WTC11 (cell line): ENCODE measurements at regions of chr1 and their contacts with region 1.

Region 1: DNA sequence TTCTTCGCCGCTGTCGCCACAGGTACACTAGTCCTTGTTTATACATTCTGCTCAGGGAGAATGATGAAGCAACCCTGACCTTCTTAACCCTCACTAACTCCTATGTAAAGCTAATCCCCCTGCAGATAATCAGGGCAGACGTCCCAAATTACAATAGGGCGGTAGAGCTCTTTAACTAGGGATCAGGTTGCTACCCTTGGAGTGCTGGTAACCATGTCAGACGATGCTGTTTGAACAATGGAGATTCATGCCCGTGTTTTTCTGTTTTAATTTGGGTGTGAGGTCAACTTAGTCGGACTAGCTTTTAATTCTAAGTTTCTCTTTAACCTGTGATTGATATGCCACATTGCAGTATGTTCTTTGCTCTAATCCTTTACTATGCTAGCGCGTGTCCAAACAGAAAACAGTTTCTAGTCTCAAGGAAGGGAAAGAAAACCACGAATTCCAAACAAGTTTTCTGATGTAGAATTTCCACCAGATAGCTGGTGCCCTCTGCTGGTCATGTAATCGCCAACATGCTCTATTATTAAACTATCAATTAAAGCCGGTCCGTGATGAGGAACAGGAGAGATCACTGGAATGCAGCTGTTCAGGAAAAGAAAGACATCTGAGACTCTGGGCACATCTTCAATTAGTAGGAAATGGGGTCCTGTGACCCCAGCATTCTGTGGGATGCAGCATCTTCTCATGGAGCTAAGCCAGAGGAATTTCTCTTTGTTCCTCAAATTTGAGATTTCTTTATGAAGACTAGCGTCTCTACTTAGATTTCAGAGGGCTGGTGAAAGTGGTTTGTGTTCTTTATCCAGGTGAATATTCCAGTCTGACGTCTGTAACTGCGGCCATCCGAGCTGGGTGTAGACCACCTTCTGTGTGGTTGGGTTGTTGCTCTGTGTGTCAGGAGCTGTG is 18.3 kb upstream of the VAMP3 start:
- DNase-seq: peak; percentile 51
- ATAC-seq: peak; percentile 88
- H3K4me3 Mint-ChIP-seq: peak overlapping the region; percentile 60
- H3K27ac Mint-ChIP-seq: peak overlapping the region; percentile 86
- H3K4me1 Mint-ChIP-seq: peaks cover 27% of the 10 kb centered on the region
- H3K27me3 Mint-ChIP-seq: no peaks in the 10 kb centered on the region
- CTCF ChIP-seq: peak; percentile 37

Region 2: DNA sequence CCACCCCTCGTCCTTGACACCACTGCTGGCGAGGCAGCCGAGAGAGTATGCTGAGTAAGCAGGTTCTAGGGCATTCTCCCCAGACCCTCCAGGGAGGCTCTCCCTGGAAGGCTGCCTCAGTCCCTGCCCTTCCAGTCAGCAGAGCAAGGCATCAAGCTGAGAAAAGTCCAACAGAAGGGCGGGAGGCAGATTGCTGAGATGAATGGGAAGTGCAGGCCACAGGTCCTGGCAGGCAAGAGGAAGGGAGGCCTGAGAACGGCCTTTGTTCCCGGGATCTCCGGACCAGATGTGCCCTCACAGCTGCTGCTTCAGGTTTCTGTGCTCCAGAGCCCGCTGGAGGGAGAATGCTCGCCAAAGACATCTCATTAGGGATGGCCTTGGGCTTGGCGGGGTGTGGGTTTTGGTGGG is 251.7 kb before region 1 on chr1:
- CTCF ChIA-PET with region 1: no interaction called
- POLR2A ChIA-PET with region 1: no interaction called
- DNase-seq: no peak
- ATAC-seq: no peak; the same call in 1 of the 2 replicates
- H3K4me3 Mint-ChIP-seq: no peak overlapping the region
- H3K27ac Mint-ChIP-seq: no peak overlapping the region
- H3K4me1 Mint-ChIP-seq: peaks cover 2% of the 10 kb centered on the region; the same call in 1 of the 2 replicates
- H3K27me3 Mint-ChIP-seq: no peaks in the 10 kb centered on the region
- CTCF ChIP-seq: no peak

Region 3: DNA sequence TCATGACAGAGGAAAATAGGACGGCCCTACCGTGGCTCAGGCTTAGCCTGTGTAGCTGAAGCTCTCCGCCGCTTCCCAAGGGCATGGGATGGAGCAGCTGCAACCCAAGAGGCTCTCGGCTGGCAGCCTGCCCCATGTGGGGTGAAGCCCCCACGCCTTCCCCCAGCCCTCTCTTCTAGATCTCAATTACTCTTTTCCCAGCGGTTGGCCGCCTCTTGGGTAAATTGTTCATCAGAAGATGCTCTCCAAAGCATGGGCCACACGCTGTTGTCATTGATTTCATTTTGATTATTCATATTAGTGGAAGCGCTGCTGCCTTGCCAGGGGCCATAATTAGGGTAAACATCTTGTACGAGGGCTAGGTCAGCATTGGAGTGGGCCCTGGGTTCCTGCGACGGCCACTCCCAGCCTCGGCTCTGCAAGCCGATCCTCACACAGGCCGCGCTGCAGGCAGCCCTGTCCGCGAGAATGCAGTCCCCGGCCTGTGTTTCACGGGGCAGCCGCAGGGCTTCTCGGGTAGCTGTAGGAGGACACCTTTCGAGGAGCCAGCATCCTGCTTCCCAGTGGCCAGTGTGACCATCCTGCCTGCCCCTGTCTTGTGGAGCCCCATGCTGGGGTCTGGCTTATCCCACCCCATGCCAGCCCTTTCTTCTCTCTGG is 96.1 kb before region 1 on chr1:
- CTCF ChIA-PET with region 1: interaction called, 10 read pairs
- POLR2A ChIA-PET with region 1: no interaction called
- DNase-seq: no peak
- ATAC-seq: no peak
- H3K4me3 Mint-ChIP-seq: no peak overlapping the region
- H3K27ac Mint-ChIP-seq: no peak overlapping the region
- H3K4me1 Mint-ChIP-seq: no peaks in the 10 kb centered on the region
- H3K27me3 Mint-ChIP-seq: no peaks in the 10 kb centered on the region; the same call in 1 of the 2 replicates
- CTCF ChIP-seq: no peak

Region 4: GRCh38 chr1:7680207-7680954 is 72.4 kb before region 1 on chr1:
- CTCF ChIA-PET with region 1: interaction called, 48 read pairs
- POLR2A ChIA-PET with region 1: no interaction called
- DNase-seq: peak; percentile 50
- ATAC-seq: peak; percentile 62
- H3K4me3 Mint-ChIP-seq: peak overlapping the region; percentile 63
- H3K27ac Mint-ChIP-seq: no peak overlapping the region
- H3K4me1 Mint-ChIP-seq: no peaks in the 10 kb centered on the region
- H3K27me3 Mint-ChIP-seq: peaks cover 22% of the 10 kb centered on the region
- CTCF ChIP-seq: no peak

Region 5: GRCh38 chr1:7704214-7705047 is 48.3 kb before region 1 on chr1:
- CTCF ChIA-PET with region 1: interaction called, 39 read pairs
- POLR2A ChIA-PET with region 1: interaction called, 3 read pairs
- DNase-seq: peak; percentile 95
- ATAC-seq: peak; percentile 88
- H3K4me3 Mint-ChIP-seq: peak overlapping the region; percentile 70; the same call in 1 of the 2 replicates
- H3K27ac Mint-ChIP-seq: no peak overlapping the region
- H3K4me1 Mint-ChIP-seq: peaks cover 16% of the 10 kb centered on the region
- H3K27me3 Mint-ChIP-seq: peaks cover 54% of the 10 kb centered on the region
- CTCF ChIP-seq: no peak

Region 6: DNA sequence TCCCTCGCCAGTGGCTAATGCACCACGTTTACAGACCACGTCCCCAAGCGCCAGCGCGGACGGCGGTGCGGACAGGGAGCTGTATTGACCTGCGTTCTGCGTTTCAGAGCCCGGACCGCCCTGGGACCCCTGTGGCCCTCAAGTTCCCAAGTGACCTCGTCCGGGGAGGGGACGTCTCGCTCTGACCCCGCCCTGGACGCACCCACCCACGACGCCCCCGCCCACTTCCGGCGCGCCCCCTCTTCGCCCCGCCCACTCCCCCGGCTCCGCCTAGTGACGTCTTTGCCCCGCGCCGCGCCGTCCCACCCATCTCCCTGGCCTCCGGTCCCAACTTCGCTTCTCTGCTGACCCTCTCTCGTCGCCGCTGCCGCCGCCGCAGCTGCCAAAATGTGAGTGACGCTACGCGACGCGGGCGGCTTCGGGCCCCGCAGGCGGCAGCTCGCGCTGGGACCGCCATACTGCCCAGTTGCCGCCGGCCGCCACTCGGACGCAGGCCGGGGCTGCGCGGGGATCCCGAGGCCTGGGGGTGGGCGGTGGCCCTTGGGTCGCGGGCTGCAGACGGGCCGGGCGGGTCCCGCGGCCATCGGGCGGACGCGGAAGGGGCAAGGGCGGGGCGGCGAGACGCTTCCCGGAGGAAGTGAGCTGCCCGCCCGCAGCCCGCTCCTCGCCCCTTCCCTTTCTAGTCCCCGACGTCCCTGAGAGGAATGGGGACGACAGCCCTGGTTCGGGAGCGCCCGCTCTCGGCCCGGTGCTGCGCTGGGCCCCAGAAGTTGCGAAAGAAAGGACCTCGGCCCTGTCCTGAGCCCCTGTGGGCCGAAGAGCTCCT is 18.4 kb after region 1 on chr1 and contains the start of gene VAMP3:
- CTCF ChIA-PET with region 1: interaction called, 13 read pairs
- POLR2A ChIA-PET with region 1: no interaction called
- DNase-seq: peak; percentile 88
- ATAC-seq: peak; percentile 95
- H3K4me3 Mint-ChIP-seq: peak within 1 kb of the TSS; percentile 86
- H3K27ac Mint-ChIP-seq: peak within 1 kb of the TSS; percentile 79
- H3K4me1 Mint-ChIP-seq: peaks cover 15% of the 10 kb centered on the region
- H3K27me3 Mint-ChIP-seq: no peaks in the 10 kb centered on the region
- CTCF ChIP-seq: no peak
- total RNA-seq, gene VAMP3: 34.7 to 50.2 TPM (median 40.2 TPM) in 3 replicates

Region 7: DNA sequence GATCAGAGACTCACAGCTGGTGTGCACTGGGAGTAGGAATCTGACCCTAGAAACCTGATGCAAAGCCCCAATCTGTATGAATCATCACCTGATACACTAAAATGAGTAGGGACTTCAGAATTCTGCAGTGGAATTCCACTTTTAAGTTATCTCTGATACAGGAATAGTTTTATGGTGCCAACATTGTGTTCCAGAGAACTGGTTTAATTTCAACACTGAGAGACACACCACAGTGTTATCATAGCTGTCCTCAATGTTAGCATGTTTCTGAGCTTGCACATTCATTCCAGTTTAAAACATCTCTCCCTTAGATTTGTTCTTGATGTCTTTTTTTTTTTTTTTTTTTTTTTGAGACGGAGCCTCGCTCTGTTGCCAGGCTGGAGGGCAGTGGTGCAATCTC is 93.0 kb after region 1 on chr1:
- CTCF ChIA-PET with region 1: no interaction called
- POLR2A ChIA-PET with region 1: no interaction called
- DNase-seq: no peak
- ATAC-seq: no peak
- H3K4me3 Mint-ChIP-seq: no peak overlapping the region
- H3K27ac Mint-ChIP-seq: no peak overlapping the region
- H3K4me1 Mint-ChIP-seq: no peaks in the 10 kb centered on the region
- H3K27me3 Mint-ChIP-seq: no peaks in the 10 kb centered on the region
- CTCF ChIP-seq: no peak

Region 8: DNA sequence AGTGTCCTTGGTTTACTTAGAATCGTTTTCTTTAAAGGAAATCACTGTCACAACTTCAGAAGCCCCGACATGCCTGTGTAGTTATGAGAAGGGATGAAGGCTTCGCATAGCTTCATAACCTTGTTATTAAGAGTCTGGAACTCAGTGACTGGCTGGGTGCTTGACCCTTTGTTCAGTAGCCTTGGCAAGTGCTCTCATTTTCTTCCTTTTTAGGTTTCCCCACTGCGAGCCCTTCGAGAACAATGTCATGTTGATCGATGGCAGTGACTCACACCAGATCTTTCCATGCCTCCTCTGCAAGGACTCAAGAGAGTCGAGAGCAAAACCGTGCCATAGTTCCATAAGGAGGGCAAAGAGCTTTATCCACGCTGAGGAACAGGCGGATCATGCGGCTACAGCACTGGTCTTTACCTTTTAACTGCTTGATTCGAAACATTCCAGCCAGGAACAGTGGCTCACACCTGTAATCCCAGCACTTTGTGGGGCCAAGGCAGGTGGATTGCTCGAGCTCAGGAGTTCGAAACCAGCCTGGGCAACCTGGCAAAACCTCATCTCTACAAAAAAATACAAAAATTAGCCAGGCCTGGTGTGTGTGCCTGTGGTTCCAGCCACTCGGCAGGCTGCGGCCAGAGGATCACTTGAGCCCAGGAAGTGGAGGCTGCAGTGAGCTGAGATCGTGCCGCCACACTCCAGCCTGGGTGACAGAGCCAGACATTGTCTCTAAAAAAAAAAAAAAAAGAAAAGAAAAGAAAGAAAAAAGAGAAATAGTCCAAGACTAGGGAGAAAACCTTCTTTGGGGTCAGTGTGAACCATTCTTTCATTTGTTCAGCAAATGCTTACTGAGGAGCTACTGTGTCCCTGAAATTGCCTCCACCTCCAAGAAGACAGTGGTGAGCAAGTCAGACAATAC is 368.8 kb after region 1 on chr1:
- CTCF ChIA-PET with region 1: no interaction called
- POLR2A ChIA-PET with region 1: no interaction called
- DNase-seq: no peak
- ATAC-seq: no peak; the same call in 1 of the 2 replicates
- H3K4me3 Mint-ChIP-seq: no peak overlapping the region
- H3K27ac Mint-ChIP-seq: no peak overlapping the region
- H3K4me1 Mint-ChIP-seq: peaks cover 27% of the 10 kb centered on the region
- H3K27me3 Mint-ChIP-seq: no peaks in the 10 kb centered on the region; the same call in none of the 2 replicates
- CTCF ChIP-seq: no peak